ENCODE measurements at regions of chr1 and their contacts with region 1.

Region 1: GRCh38 chr1:119372490-119373086 is 4.0 kb downstream of the HAO2 start:
- DNase-seq: no peak
- ATAC-seq: peak; percentile 83
- H3K4me3 ChIP-seq: no peak overlapping the region
- H3K27ac ChIP-seq: no peak overlapping the region
- H3K4me1 ChIP-seq: peaks cover 5% of the 10 kb centered on the region; the same call in 1 of the 2 replicates
- H3K27me3 ChIP-seq: no peaks in the 10 kb centered on the region
- CTCF ChIP-seq: peak in 2 of 3 experiments; percentile 35 to 57; a peak in 4 of 6 replicates
- EP300 ChIP-seq: no peak
- POLR2A ChIP-seq: no peak
- RAD21 ChIP-seq: peak; percentile 56

Region 2: GRCh38 chr1:119286587-119287181 is 85.9 kb before region 1 on chr1:
- CTCF ChIA-PET with region 1: interaction called, 137 read pairs
- POLR2A ChIA-PET with region 1: no interaction called
- RAD21 ChIA-PET with region 1: interaction called, 63 read pairs
- SMC1A ChIA-PET with region 1: interaction called, 68 read pairs
- in situ Hi-C with region 1: loop called (anchors 5 kb)
- intact Hi-C with region 1: loop called (anchors 1 kb)
- DNase-seq: no peak
- ATAC-seq: peak; percentile 98
- H3K4me3 ChIP-seq: no peak overlapping the region
- H3K27ac ChIP-seq: no peak overlapping the region
- H3K4me1 ChIP-seq: no peaks in the 10 kb centered on the region
- H3K27me3 ChIP-seq: no peaks in the 10 kb centered on the region
- CTCF ChIP-seq: peak; percentile 67 to 73 (median 72)
- EP300 ChIP-seq: no peak
- POLR2A ChIP-seq: no peak
- RAD21 ChIP-seq: peak; percentile 97

Region 3: DNA sequence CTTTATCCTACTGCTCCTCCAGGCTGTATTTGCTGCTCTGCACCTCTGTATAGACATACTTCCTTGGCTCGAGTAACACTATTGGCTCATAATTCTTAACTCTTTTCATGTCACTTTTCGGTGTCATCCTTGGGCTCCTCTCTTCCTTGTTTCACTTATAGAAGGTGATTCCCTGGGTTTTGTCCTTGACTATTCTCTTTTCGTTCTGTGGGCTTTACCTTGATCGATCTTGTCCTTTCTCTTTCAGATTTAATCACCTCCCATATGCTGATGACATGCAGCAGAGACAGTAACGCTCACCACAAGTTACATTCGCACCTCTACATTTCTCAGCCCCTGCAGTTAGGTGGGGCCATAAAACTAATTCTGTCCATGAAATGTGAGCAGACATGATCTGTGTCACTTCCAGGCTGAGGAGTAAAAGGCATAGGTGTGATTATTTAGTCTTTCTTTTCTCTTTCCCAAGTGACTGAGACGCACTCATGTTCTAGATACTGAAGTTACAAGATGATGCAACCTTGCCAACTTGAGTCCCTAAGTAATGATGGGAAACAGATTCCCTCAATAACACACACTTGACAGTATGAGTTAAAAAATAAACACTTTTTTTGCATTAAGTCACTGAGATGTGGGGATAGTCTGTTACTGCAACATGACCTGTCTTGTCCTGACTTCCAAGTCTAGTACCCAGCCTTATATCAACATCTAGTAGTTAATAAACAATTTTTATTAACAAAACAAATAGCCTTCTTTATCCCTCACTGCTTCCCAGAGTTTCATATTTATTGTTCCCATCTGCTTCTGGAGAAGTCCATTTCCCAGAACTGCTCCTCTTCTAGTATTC is 53.9 kb before region 1 on chr1:
- CTCF ChIA-PET with region 1: interaction called, 55 read pairs
- POLR2A ChIA-PET with region 1: no interaction called
- RAD21 ChIA-PET with region 1: interaction called, 39 read pairs
- SMC1A ChIA-PET with region 1: interaction called, 43 read pairs
- in situ Hi-C with region 1: no loop called
- intact Hi-C with region 1: no loop called
- DNase-seq: peak; percentile 82
- ATAC-seq: peak; percentile 84
- H3K4me3 ChIP-seq: peak overlapping the region; percentile 59
- H3K27ac ChIP-seq: peak overlapping the region; percentile 76
- H3K4me1 ChIP-seq: peaks cover 22% of the 10 kb centered on the region
- H3K27me3 ChIP-seq: no peaks in the 10 kb centered on the region
- CTCF ChIP-seq: peak in 1 of 3 experiments; percentile 3; a peak in 1 of 6 replicates
- EP300 ChIP-seq: peak in 1 of 2 experiments; percentile 66; a peak in 1 of 4 replicates
- POLR2A ChIP-seq: no peak
- RAD21 ChIP-seq: peak; percentile 4; the same call in 1 of the 2 replicates

Region 4: DNA sequence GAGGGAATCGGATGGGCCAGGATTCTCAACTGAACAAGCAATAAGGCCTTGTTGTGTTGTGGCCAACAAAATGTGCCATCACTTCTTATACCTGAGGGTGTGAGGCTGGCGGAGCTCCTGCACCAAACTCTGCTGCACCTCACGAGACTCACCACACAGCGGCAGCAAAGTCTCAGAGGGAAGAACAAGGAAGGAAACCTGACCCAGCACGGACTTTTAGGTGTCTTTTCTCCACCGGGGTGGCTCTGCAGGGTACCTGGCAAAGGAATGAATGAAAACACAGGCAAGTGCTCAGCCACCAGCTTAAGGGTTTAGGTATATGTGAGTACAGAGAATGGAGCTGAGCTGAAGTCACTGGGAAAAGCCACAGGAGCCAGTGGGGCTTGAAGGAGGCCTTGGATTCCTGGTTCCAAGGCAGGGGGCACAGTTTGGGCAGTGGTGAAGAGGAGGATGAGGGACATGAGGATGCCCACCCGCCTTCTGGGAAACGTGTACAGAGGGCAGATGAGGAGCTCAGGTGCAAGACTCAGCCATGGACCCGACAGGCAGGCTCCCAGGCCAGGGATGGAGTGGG is 103.4 kb after region 1 on chr1:
- CTCF ChIA-PET with region 1: interaction called, 9 read pairs
- POLR2A ChIA-PET with region 1: no interaction called
- RAD21 ChIA-PET with region 1: no interaction called
- SMC1A ChIA-PET with region 1: interaction called, 5 read pairs
- in situ Hi-C with region 1: no loop called
- intact Hi-C with region 1: loop called (anchors 10 kb)
- DNase-seq: no peak
- ATAC-seq: peak; percentile 96
- H3K4me3 ChIP-seq: no peak overlapping the region
- H3K27ac ChIP-seq: no peak overlapping the region
- H3K4me1 ChIP-seq: no peaks in the 10 kb centered on the region
- H3K27me3 ChIP-seq: no peaks in the 10 kb centered on the region
- CTCF ChIP-seq: peak; percentile 64 to 83 (median 81)
- EP300 ChIP-seq: no peak
- POLR2A ChIP-seq: no peak
- RAD21 ChIP-seq: peak; percentile 59

Region 5: DNA sequence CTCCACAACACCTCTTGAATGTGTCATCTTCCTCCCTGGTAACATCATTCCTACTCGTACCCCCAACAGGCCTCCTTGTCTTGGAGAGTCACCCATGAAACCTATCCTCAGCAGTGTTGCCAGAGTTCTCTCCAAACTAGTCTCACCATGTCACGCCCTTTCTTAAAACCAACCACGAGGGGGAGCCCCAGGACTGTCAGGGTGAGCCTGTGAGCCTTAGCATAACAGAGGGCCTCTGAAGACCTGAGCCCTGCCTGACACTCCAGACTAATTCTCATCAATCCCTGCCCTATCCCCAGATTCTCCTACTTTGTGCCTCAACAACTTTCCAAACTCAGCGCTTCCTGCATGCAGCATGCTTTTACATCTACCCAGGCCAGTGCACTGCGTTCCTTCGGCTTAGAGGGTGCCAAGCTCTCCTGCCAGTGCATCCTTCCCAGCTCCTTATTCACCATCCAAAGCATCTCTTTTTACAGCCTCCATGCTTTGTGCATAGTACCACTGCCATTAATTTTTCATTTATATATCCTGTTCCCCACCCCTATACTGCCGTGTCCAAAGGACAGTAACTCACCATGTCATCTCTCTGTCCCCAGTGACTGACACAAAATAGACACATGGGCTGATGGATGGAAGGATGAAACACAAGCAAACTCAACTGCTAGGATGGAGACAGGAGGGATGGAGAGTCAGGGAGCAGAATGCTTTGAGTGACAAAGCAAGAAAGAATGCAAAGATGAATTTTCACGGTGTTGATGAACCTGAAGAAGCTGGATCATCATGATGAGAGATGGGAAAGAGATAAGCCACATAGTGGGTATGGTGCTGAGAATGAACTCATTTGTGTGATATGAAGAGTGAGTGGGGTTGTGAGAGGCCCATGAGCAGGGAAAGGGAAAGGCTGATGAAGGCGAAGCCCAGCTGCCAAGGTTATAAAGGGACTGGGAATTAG is 241.5 kb after region 1 on chr1:
- CTCF ChIA-PET with region 1: interaction called, 12 read pairs
- POLR2A ChIA-PET with region 1: no interaction called
- RAD21 ChIA-PET with region 1: interaction called, 4 read pairs
- SMC1A ChIA-PET with region 1: interaction called, 9 read pairs
- in situ Hi-C with region 1: no loop called
- intact Hi-C with region 1: loop called (anchors 1 kb)
- DNase-seq: peak; percentile 43
- ATAC-seq: peak; percentile 95
- H3K4me3 ChIP-seq: no peak overlapping the region
- H3K27ac ChIP-seq: no peak overlapping the region
- H3K4me1 ChIP-seq: peaks cover 7% of the 10 kb centered on the region; the same call in 1 of the 2 replicates
- H3K27me3 ChIP-seq: no peaks in the 10 kb centered on the region; a peak in 1 of 4 replicates
- CTCF ChIP-seq: peak; percentile 63 to 77 (median 70)
- EP300 ChIP-seq: no peak
- POLR2A ChIP-seq: no peak
- RAD21 ChIP-seq: peak; percentile 93

Region 6: GRCh38 chr1:119675349-119676345 is 303.1 kb after region 1 on chr1:
- CTCF ChIA-PET with region 1: interaction called, 17 read pairs
- POLR2A ChIA-PET with region 1: no interaction called
- RAD21 ChIA-PET with region 1: interaction called, 6 read pairs
- SMC1A ChIA-PET with region 1: interaction called, 5 read pairs
- in situ Hi-C with region 1: loop called (anchors 10 kb)
- intact Hi-C with region 1: no loop called
- DNase-seq: peak; percentile 42
- ATAC-seq: peak; percentile 94
- H3K4me3 ChIP-seq: no peak overlapping the region; the same call in 1 of the 2 replicates
- H3K27ac ChIP-seq: no peak overlapping the region
- H3K4me1 ChIP-seq: no peaks in the 10 kb centered on the region
- H3K27me3 ChIP-seq: no peaks in the 10 kb centered on the region; a peak in 1 of 4 replicates
- CTCF ChIP-seq: peak; percentile 63 to 80 (median 78)
- EP300 ChIP-seq: no peak
- POLR2A ChIP-seq: no peak
- RAD21 ChIP-seq: peak; percentile 76

Measured in GM12878 (cell line).